Astrocyte of the cerebellum (primary cell): ENCODE measurements at regions of chr1 and their contacts with region 1.

Region 1: GRCh38 chr1:51926171-51926812 is 47.8 kb upstream of the NRDC start:
- DNase-seq: no peak
- H3K4me3 ChIP-seq: no peak overlapping the region
- CTCF ChIP-seq: peak; percentile 33

Region 2: GRCh38 chr1:51976846-51977535 is 50.7 kb after region 1 on chr1:
- in situ Hi-C with region 1: no loop called
- DNase-seq: no peak
- H3K4me3 ChIP-seq: no peak overlapping the region
- CTCF ChIP-seq: no peak

Region 3: DNA sequence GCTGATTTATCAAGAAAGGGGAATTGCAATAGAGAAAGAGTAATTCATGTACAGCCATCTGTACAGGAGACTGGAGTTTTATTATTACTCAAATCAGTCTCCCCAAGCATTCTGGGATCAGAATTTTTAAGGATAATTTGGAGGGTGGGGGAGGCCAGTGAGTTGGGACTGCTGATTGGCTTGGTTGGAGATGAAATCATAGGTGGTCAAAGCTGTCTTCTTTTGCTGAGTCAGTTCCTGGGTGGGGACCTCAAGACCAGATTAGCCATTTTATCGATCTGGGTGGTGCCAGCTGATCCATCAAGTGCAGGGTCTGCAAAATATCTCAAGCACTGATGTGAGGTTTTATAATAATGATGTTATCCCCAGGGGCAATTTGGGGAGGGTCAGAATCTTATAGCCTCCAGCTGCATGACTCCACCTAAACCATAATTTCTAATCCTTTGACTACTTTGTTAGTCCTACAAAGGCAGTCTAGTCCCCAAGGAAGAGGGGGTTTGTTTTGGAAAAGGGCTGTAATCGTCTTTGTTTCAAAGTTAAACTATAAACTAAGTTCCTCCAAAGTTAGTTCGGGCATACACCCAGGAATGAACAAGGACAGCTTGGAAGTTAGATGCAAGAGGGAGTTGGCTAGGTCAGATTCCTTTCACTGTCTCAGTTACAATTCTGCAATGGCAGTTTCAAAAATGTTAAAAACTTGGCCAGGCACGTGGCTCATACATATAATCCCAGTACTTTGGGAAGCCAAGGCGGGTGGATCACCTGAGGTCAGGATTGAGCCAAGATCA is 81.1 kb after region 1 on chr1:
- in situ Hi-C with region 1: loop called (anchors 5 kb)
- DNase-seq: no peak
- H3K4me3 ChIP-seq: no peak overlapping the region
- CTCF ChIP-seq: no peak

Region 4: DNA sequence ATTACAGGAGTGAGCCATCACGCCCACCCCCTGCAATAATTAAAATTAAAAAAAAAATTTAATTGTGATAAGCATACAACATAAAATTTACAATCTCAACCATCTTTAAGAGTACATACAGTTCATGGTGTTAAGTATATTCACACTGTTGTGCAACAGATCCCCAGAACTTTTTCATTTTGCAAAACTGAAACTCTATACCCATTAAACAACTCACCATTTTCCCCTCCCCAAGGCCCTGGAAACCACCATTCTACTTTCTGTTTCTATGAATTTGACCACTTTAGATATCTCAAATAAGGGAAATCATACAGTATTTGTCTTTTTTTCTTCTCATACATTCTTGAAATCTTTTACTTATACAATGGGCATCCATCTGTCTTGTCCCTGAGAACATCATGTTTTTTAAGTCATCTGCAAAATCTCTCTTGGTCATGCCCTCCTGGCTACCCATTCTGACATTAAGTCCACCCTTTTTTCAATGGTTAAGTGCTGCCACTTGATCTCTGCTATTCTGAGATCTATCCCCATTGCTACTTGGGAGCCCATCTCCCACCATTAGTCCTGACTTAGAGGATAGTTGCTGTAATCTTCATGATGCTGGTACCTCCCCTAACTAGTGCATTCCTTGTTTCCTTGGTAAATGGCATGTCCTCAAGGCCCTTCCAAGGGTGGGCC is 176.2 kb after region 1 on chr1:
- in situ Hi-C with region 1: no loop called
- DNase-seq: no peak
- H3K4me3 ChIP-seq: no peak overlapping the region
- CTCF ChIP-seq: no peak